ENCODE measurements at regions of chr19 and their contacts with region 1.

Region 1: GRCh38 chr19:771332-771785 is 20.4 kb downstream of the MISP start:
- DNase-seq: no peak
- H3K4me3 ChIP-seq: no peak overlapping the region
- H3K27ac ChIP-seq: no peak overlapping the region
- H3K4me1 ChIP-seq: peaks cover 0 to 7% of the 10 kb centered on the region in 2 donors
- H3K27me3 ChIP-seq: no peaks in the 10 kb centered on the region
- CTCF ChIP-seq: peak in 2 of 3 experiments; percentile 23 to 43

Region 2: DNA sequence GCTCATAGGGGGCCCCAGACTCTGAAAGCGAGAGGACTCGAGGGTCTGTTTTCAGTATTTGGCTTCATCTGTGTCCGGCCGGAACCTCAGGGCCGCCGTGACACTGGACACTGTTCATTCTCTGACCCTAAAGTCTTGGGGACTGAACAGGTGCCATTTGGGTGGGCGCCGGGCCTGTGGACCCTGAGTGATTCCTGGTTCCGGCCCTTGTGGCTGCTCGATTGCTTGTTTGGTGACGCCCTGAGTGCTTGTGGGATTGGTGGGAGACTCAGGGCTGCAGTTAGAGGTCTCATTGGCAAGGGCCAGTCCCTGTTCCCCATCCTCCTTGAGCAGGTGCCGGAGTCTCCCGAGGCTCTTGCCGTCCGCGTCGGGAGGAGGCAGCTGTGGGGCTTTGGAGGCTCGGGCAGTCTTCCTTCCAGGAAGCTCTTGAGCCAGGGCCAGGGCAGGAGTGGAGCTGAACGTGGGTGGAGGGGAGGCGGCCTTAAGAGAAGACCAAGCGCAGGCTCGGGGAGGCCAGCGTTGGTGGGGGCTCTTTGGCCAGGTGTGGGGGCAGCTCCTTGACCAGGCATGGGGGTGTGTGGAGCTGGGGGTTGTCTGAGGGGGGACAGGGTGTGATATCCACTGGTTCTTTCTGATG is 30.6 kb after region 1 on chr19:
- intact Hi-C with region 1: no loop called
- DNase-seq: no peak
- H3K4me3 ChIP-seq: peak overlapping the region; percentile 39 to 52
- H3K27ac ChIP-seq: peak overlapping the region; percentile 21 to 32
- H3K4me1 ChIP-seq: peaks cover 34 to 47% of the 10 kb centered on the region in 2 donors
- H3K27me3 ChIP-seq: no peaks in the 10 kb centered on the region
- CTCF ChIP-seq: no peak

Region 3: GRCh38 chr19:821825-822503 is 50.6 kb after region 1 on chr19 and contains the start of gene PLPPR3:
- intact Hi-C with region 1: no loop called
- DNase-seq: no peak
- H3K4me3 ChIP-seq: peak within 1 kb of the TSS; percentile 9 to 45
- H3K27ac ChIP-seq: no peak within 1 kb of the TSS
- H3K4me1 ChIP-seq: peaks cover 9 to 10% of the 10 kb centered on the region in 2 donors
- H3K27me3 ChIP-seq: peaks cover 23% of the 10 kb centered on the region
- CTCF ChIP-seq: no peak
- total RNA-seq, gene PLPPR3: not detected

Region 4: DNA sequence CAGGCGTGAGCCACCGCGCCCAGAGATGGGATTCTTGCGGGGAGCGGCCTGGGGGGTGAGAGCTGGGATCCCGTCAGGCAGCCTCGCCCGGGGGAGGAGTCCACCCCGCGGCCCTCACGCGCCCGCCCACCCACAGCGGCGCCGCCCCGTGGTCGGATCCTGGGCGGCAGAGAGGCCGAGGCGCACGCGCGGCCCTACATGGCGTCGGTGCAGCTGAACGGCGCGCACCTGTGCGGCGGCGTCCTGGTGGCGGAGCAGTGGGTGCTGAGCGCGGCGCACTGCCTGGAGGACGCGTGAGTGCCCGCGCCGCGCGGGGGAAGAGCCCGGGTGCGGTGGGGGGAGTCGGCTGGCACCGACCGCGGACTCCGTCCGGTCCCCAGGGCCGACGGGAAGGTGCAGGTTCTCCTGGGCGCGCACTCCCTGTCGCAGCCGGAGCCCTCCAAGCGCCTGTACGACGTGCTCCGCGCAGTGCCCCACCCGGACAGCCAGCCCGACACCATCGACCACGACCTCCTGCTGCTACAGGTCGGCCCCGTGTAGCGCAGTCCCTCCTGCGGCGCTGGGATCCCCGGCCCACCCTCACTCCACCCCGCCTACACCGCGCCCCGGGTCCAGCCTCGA is 89.2 kb after region 1 on chr19:
- intact Hi-C with region 1: loop called (anchors 10 kb)
- DNase-seq: no peak
- H3K4me3 ChIP-seq: peak overlapping the region; percentile 27 to 52
- H3K27ac ChIP-seq: no peak overlapping the region
- H3K4me1 ChIP-seq: peaks cover 0 to 11% of the 10 kb centered on the region in 2 donors
- H3K27me3 ChIP-seq: peaks cover 24% of the 10 kb centered on the region
- CTCF ChIP-seq: peak in 1 of 3 experiments; percentile 14

Region 5: DNA sequence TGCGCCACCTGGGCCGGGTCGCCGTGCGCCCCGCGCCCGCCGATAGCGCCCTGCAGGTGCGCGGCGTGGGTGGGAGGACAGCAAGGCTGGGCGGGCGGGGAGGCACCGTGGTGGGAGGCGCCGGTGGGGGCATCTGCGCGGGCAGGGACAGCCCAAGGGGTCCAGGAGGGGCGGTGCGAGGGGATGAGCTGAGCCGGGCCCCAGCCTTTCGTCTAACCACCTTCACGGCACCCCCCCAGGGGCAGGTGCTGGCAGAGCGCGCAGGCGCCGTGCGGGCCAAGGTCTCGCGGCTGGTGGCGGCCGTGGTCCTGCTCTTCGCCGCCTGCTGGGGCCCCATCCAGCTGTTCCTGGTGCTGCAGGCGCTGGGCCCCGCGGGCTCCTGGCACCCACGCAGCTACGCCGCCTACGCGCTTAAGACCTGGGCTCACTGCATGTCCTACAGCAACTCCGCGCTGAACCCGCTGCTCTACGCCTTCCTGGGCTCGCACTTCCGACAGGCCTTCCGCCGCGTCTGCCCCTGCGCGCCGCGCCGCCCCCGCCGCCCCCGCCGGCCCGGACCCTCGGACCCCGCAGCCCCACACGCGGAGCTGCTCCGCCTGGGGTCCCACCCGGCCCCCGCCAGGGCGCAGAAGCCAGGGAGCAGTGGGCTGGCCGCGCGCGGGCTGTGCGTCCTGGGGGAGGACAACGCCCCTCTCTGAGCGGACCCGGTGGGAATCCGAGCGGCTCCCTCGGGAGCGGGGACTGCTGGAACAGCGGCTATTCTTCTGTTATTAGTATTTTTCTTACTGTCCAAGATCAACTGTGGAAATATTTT is 148.9 kb after region 1 on chr19:
- intact Hi-C with region 1: loop called (anchors 2 kb)
- DNase-seq: no peak
- H3K4me3 ChIP-seq: peak overlapping the region; percentile 40 to 43
- H3K27ac ChIP-seq: no peak overlapping the region
- H3K4me1 ChIP-seq: peaks cover 12 to 37% of the 10 kb centered on the region in 2 donors
- H3K27me3 ChIP-seq: peaks cover 17% of the 10 kb centered on the region
- CTCF ChIP-seq: no peak

Region 6: DNA sequence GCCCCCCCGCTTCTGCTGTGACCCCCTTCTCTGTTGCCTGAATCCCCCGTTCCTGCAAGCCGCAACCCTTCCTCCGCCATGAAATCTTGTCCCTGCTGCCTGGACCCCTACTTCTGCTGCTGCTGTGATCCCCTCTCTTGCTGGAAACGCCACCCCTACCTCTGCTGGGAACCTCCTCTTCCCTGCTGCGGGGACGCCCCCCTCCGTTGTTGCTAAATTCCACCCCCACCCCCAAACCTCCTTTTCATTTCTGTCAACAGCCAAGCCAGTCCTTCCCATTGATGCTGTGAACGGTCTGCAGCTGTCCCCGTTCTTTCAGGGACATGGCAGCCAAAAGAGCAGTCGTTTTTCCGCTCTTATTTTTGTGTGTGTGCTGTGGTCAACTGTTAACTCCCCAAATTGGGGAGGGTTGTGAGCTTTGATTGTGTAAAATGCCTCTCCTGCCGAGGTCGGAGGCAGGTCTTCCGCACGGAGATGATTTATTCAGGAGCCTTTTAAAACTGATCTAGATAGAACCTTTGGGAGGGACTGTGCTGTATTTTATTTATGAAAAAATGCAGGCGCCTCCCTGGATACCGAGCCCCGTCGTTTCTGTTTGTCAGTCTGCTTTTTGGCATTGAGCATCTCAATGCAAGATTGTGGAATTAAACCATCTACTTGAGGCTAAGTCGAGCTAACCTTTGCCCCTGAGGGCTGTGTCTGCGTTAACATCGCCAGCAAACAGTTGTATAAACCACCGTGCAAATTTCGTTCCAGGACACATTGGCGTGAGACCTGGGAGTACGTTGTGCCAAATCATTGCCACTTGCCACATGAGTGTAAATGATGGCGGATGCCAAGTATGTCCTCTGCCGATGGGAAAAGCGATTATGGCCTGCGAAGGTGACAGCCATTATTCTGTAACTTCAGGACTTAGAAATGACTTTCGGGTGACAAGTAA is 584.5 kb after region 1 on chr19:
- intact Hi-C with region 1: no loop called
- DNase-seq: no peak
- H3K4me3 ChIP-seq: peak overlapping the region; percentile 85 to 98
- H3K27ac ChIP-seq: peak overlapping the region; percentile 88 to 90
- H3K4me1 ChIP-seq: peaks cover 3 to 25% of the 10 kb centered on the region in 2 donors
- H3K27me3 ChIP-seq: no peaks in the 10 kb centered on the region
- CTCF ChIP-seq: no peak